ENCODE measurements at regions of chr2 and their contacts with region 1.

Region 1: DNA sequence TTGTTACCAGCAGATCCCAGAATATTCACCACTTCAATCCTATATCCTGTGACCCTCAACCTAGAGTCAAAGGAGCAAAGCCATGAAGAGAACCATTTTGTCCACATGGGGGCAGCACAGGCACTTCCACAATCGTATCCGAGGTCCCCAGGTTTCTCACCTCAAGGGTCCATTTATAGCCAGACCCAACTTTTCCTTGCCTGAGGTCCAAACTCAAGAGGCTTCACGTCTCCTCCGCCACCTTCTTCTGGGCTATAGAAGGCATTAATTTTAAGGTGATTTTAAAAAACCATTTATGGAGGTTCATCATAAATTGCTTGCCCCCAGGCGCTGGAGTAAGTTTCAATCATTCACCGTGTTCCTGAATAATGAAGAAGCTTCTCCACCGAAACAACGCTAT is 111.6 kb upstream of the NABP1 start:
- DNase-seq: peak; percentile 47 to 64 (median 57)
- ATAC-seq: peak; percentile 82 to 89 (median 88)
- H3K4me3 ChIP-seq: no peak overlapping the region
- H3K27ac ChIP-seq: no peak overlapping the region
- H3K4me1 ChIP-seq: no peaks in the 10 kb centered on the region
- H3K27me3 ChIP-seq: peaks cover 0 to 6% of the 10 kb centered on the region in 2 donors
- CTCF ChIP-seq: peak; percentile 65 to 81 (median 78)
- POLR2A ChIP-seq: no peak

Region 2: GRCh38 chr2:191691016-191691735 is 124.8 kb after region 1 on chr2:
- intact Hi-C with region 1: loop called (anchors 5 to 10 kb)
- DNase-seq: no peak
- ATAC-seq: peak; percentile 79 to 92 (median 91)
- H3K4me3 ChIP-seq: no peak overlapping the region
- H3K27ac ChIP-seq: no peak overlapping the region
- H3K4me1 ChIP-seq: peaks cover 0 to 18% (median 0%) of the 10 kb centered on the region in 4 donors
- H3K27me3 ChIP-seq: no peaks in the 10 kb centered on the region
- CTCF ChIP-seq: peak; percentile 73 to 82 (median 76)
- POLR2A ChIP-seq: no peak

Region 3: DNA sequence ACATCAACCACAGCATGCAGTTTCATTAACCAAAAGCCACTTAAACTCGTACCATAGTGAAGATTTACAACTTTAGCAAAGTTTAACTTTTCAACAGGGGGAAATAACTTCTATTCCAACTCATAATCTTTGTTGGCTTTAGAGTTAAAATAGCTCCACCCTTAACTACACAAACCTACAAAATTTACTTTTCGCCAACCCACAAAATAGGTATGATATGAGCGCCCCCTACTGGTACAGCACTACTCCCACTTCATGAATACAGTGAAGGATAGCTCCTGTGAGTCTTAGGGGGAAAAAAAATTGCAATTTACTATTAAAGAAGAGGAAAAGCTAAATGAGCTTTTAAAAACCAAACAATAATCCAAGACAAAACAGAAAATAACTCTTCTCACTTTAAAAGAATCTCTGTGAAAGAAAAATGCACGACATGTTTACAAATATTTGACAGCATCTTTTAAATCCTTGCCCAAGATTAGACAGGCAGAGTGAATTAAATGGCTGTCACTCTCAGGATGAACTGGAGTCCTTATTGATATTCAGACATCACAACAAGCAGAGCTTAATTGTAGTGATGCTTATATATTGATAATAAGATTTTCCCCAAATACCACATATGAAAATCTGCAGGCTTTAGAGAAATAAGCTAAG is 596.2 kb after region 1 on chr2:
- intact Hi-C with region 1: loop called in 1 of 2 experiments (anchors 10 kb)
- DNase-seq: peak in 2 of 3 donors; percentile 28 to 68
- ATAC-seq: peak; percentile 93 to 99 (median 96)
- H3K4me3 ChIP-seq: no peak overlapping the region
- H3K27ac ChIP-seq: no peak overlapping the region
- H3K4me1 ChIP-seq: no peaks in the 10 kb centered on the region
- H3K27me3 ChIP-seq: no peaks in the 10 kb centered on the region
- CTCF ChIP-seq: peak; percentile 91 to 97 (median 94)
- POLR2A ChIP-seq: no peak

Measured in right lobe of liver (tissue), 6 donors.